Tibial artery (tissue), 4 donors: ENCODE measurements at regions of chr1 and their contacts with region 1.

Region 1: GRCh38 chr1:150561974-150562445 is 12.8 kb downstream of the ADAMTSL4 start:
- DNase-seq: peak; percentile 93 to 97
- H3K4me3 ChIP-seq: peak overlapping the region; percentile 51 to 53
- H3K27ac ChIP-seq: peak overlapping the region; percentile 99
- H3K4me1 ChIP-seq: peaks cover 12 to 89% (median 82%) of the 10 kb centered on the region in 4 donors
- H3K27me3 ChIP-seq: no peaks in the 10 kb centered on the region
- CTCF ChIP-seq: no peak

Region 2: GRCh38 chr1:150410582-150411101 is 151.4 kb before region 1 on chr1:
- intact Hi-C with region 1: no loop called
- DNase-seq: no peak
- H3K4me3 ChIP-seq: no peak overlapping the region
- H3K27ac ChIP-seq: no peak overlapping the region
- H3K4me1 ChIP-seq: peaks cover 0 to 20% (median 10%) of the 10 kb centered on the region in 4 donors
- H3K27me3 ChIP-seq: no peaks in the 10 kb centered on the region
- CTCF ChIP-seq: no peak

Region 3: GRCh38 chr1:150578965-150579798 is 17.2 kb after region 1 on chr1 and contains the start of gene MCL1:
- intact Hi-C with region 1: loop called (anchors 2 kb)
- DNase-seq: peak; percentile 93 to 97
- H3K4me3 ChIP-seq: peak within 1 kb of the TSS; percentile 93 to 97
- H3K27ac ChIP-seq: peak within 1 kb of the TSS; percentile 99
- H3K4me1 ChIP-seq: peaks cover 0 to 28% (median 12%) of the 10 kb centered on the region in 4 donors
- H3K27me3 ChIP-seq: no peaks in the 10 kb centered on the region
- CTCF ChIP-seq: no peak

Region 4: DNA sequence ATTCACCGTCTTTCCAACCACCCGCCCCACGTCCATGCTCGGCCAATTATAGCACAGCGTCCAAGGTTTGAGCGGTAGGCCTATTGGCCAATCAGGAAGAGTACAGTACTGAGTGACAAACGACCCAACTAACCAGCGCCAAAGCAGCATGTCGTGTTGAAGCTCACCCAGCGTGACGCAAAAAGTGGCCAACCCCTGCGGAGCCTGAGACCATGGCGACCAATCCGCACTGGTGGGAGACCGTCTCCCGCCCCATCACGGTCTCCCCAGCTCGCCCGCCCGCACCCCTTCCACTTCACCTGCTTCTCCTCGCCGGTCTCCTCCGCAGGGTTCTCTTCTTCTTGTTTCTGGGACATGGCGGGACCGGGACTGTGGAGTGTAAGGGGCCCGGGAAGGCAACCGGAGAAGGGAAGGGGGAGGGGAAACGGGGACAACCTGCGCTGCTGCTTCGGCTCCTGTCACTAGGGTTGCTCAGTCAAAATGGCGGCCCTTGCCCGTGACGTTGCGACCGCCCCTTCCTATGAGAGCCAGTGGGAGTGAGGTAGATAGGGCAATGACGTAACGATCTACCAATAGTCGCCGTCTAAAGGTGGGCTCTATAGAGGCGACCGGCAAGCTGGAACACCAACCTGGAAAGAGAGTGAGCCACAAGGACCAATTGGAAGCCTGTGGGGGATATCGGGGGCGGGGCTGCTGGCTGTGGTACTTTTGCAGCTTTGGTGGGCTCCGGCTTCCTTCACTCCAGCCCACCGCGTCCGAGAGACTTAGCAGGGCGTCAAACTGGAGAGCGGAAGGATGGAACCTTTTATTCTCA is 67.3 kb after region 1 on chr1 and contains the start of gene ENSA:
- intact Hi-C with region 1: loop called (anchors 2 kb)
- DNase-seq: peak; percentile 99
- H3K4me3 ChIP-seq: peak within 1 kb of the TSS; percentile 62 to 68
- H3K27ac ChIP-seq: peak within 1 kb of the TSS; percentile 85 to 94
- H3K4me1 ChIP-seq: peaks cover 4 to 23% (median 13%) of the 10 kb centered on the region in 4 donors
- H3K27me3 ChIP-seq: no peaks in the 10 kb centered on the region
- CTCF ChIP-seq: peak in 1 of 2 experiments; percentile 17

Region 5: DNA sequence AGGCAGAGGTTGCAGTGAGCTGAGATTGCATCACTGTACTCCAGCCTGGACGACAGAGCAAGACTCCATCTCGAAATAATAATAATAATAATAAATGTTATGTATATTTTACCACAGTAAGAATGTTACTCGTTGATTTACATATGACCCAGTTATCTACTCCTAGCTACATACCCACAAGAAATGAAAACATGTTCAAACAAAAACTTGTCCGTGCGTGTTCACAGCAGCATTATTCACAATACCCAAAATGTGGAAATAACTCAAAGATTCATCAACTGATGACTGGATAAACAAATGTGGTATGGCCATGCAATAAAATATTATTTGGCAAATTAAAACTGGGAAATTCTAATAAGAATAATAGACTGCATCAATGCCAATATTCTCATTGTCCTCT is 99.1 kb after region 1 on chr1:
- intact Hi-C with region 1: no loop called
- DNase-seq: no peak
- H3K4me3 ChIP-seq: no peak overlapping the region
- H3K27ac ChIP-seq: no peak overlapping the region
- H3K4me1 ChIP-seq: no peaks in the 10 kb centered on the region
- H3K27me3 ChIP-seq: no peaks in the 10 kb centered on the region
- CTCF ChIP-seq: no peak